K562 (cell line): ENCODE measurements at regions of chr3 and their contacts with region 1.

Region 1: GRCh38 chr3:9013782-9014563 is 50.7 kb upstream of the RAD18 start:
- DNase-seq: peak; percentile 8 to 80 (median 59)
- ATAC-seq: peak; percentile 83
- H3K4me3 ChIP-seq: no peak overlapping the region
- H3K27ac ChIP-seq: no peak overlapping the region
- H3K4me1 ChIP-seq: no peaks in the 10 kb centered on the region
- H3K27me3 ChIP-seq: peaks cover 8 to 21% of the 10 kb centered on the region in 2 experiments; a peak in 4 of 5 replicates
- CTCF ChIP-seq: 0 out of 6 replicates have a peak, but pooled peaks of 2 of the 3 experiments have one; percentile 5 to 10
- EP300 ChIP-seq: no peak
- POLR2A ChIP-seq: no peak
- RAD21 ChIP-seq: no peak

Region 2: DNA sequence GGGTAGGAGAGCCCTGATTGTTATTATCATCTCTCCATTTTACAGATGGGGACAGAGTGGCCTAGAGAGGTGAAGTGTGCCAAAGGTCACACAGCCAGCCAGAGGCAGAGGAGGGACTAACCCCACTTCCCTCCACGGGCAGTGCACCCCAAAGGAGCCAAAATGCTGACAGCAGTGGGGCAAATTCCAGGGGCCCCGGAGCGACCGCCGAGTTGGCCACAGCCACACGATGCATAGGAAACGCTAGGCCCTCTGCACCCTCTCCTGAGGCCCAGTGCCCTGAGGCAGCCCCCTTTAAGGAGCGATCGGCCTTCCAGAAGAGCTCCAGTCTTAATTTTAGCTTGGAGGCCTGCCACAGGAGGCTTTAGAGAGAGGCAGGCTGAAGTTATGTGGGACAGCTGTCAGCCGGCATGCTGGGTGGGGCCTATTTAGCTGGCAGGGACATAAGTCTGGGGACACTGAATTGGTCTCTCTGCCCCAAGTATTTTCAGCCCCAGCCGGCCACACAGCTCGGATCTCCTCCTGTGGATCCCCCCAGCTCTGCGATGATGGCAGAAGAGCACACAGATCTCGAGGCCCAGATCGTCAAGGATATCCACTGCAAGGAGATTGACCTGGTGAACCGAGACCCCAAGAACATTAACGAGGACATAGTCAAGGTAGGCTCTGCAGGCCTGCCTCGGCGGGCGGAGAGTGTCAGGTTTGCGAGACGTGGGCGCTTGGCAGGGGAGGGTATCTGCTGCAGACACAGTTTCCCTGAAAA is 280.5 kb before region 1 on chr3 and contains the start of gene CAV3:
- CTCF ChIA-PET with region 1: no interaction called
- POLR2A ChIA-PET with region 1: no interaction called
- in situ Hi-C with region 1: no loop called
- intact Hi-C with region 1: no loop called
- DNase-seq: no peak
- ATAC-seq: no peak
- H3K4me3 ChIP-seq: no peak within 1 kb of the TSS
- H3K27ac ChIP-seq: no peak within 1 kb of the TSS
- H3K4me1 ChIP-seq: no peaks in the 10 kb centered on the region
- H3K27me3 ChIP-seq: peaks cover 26 to 74% of the 10 kb centered on the region in 2 experiments
- CTCF ChIP-seq: no peak
- EP300 ChIP-seq: no peak
- POLR2A ChIP-seq: no peak
- RAD21 ChIP-seq: no peak
- polyA plus RNA-seq, gene CAV3: not detected

Region 3: GRCh38 chr3:8997151-8997550 is 16.8 kb before region 1 on chr3:
- CTCF ChIA-PET with region 1: no interaction called
- POLR2A ChIA-PET with region 1: interaction called, 4 read pairs
- in situ Hi-C with region 1: no loop called
- intact Hi-C with region 1: loop called (anchors 1 kb)
- DNase-seq: no peak
- ATAC-seq: no peak
- H3K4me3 ChIP-seq: no peak overlapping the region
- H3K27ac ChIP-seq: no peak overlapping the region
- H3K4me1 ChIP-seq: no peaks in the 10 kb centered on the region
- H3K27me3 ChIP-seq: peaks cover 38 to 57% of the 10 kb centered on the region in 2 experiments
- CTCF ChIP-seq: no peak
- EP300 ChIP-seq: no peak
- POLR2A ChIP-seq: no peak
- RAD21 ChIP-seq: no peak